OCI-LY7 (cell line): ENCODE measurements at regions of chr20 and their contacts with region 1.

Region 1: GRCh38 chr20:49534255-49534712 is 33.7 kb downstream of the PTGIS start:
- DNase-seq: peak; percentile 81
- H3K4me3 ChIP-seq: no peak overlapping the region
- H3K27ac ChIP-seq: no peak overlapping the region
- H3K4me1 ChIP-seq: peaks cover 10% of the 10 kb centered on the region
- CTCF ChIP-seq: peak; percentile 94

Region 2: DNA sequence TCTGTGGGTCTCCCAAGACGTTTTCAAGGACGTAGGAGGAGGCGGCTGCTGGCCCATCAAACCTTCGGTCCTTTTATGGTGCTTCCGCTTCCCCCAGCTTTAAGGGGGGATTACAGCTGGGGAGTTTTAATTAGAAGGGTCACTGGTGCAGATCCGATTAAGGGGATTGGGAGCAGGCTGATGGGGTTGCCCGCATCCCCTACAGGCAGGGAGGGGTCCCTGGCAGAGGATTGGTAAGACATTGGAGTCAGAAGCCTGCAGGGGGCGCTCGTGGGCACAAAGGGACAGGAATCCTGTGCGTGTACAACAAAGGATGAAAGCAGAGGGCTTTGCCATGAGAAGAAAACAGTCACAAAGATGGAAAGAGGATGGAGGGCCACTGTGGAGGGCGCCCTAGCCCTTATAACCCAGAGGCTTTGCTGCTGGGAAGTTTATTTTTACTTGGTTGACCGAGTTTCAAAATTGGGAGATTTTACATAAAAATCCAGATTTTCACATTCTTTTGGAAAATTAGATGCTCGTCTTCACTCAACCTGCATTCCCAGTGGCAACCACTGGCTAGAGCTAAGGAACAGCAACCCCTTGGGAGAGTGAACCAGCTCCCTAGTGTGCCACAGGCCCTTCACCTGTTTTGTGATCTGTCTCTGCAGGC is 149.7 kb before region 1 on chr20:
- CTCF ChIA-PET with region 1: no interaction called
- POLR2A ChIA-PET with region 1: no interaction called
- intact Hi-C with region 1: loop called (anchors 5 kb)
- DNase-seq: peak; percentile 72
- H3K4me3 ChIP-seq: no peak overlapping the region
- H3K27ac ChIP-seq: no peak overlapping the region
- H3K4me1 ChIP-seq: no peaks in the 10 kb centered on the region
- CTCF ChIP-seq: peak; percentile 93